AG04449 (cell line): ENCODE measurements at regions of chr2 and their contacts with region 1.

Region 1: GRCh38 chr2:231104115-231104713 is 20.6 kb downstream of the HTR2B start:
- DNase-seq: peak; percentile 26
- H3K4me3 ChIP-seq: no peak overlapping the region
- CTCF ChIP-seq: peak; percentile 66

Region 2: GRCh38 chr2:231063347-231063746 is 40.9 kb before region 1 on chr2:
- CTCF ChIA-PET with region 1: no interaction called
- POLR2A ChIA-PET with region 1: no interaction called
- DNase-seq: no peak
- H3K4me3 ChIP-seq: no peak overlapping the region
- CTCF ChIP-seq: no peak

Region 3: DNA sequence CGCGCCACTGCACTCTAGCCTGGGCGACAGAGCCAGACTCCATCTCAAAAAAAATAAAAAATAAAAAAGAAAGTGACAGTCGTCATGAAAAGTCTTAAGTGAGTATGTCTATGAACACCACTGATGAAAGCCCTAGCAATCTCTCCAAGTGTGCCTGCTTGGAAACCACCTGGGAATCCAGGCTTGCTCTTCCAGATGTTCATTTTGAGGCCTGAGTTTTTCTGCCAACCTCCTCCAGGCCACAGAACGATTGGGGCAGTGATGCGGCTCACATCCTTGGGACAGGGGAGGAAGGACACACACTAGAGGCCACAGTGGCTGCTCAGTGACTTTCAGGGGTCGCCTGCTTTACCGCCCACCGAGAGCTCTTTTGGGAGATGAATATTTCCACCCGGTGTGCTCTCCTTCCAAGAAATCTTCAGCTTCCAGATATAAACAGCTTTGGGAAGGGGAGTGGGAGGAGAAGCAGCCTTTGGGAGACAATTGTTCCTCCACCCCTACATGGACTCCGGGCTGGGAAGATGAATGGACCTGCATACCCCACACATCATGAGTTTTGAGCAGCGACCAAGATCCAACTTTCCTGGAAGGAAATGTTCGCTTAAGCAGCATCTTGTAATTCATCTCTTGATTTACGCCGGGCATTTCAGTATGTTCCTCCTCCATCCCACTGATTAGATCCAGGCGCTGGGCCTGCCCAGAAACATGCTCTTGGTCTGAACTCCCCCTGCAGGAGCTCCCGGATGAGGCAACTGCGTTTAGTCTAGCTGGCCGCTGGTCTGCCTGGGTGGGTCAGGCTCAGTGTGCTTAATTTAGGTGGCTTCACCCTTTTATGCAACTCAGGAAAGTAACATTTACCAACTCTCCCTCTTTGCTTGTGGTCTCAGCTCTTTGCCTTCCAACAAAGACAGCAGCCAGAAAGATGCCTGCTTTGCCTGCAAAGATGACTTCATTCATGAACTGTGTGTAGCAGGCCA is 88.0 kb after region 1 on chr2:
- CTCF ChIA-PET with region 1: interaction called, 336 read pairs
- POLR2A ChIA-PET with region 1: no interaction called
- DNase-seq: peak; percentile 60
- H3K4me3 ChIP-seq: no peak overlapping the region
- CTCF ChIP-seq: peak; percentile 89

Region 4: DNA sequence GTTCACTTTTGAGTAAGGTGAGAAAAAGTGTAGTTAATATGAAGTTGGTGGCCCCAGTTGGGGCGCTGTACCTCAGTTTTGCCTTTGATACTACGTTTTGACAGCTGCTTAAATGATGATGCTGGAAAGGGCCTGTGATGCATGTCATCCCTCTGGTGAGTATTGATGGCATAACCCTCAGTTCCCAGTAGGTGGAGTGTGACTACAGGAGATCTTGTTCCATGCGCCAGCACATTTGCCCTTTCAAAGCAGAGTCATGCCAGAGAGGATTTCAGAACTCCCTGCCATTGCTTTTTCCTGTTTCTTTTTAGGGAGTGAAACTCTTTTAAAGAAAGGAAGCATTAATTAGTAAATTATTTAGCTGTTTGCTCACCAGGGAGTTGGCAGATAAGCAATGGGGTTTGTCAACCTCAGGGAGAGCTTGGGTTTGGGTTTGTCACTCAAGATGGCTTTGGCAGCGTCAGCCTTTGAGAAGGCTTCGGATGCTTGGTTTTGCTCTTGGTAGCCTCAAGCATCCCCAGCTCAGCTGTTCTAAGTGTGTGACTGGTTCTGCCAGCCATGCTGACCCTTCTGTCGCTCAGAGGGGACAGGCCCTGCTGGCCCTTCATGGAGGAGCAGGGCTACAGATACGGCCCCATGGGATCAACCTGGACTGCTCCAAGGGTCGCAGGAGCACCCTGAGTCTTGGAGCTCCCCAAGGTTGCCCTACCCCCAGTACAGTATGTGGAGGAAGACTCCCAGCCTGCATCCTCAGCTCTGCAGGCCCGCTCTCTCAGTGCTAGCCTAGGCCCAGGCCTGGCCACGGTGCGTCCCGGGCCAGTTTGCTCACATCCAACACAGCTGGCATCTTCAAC is 123.3 kb after region 1 on chr2:
- CTCF ChIA-PET with region 1: interaction called, 87 read pairs
- POLR2A ChIA-PET with region 1: no interaction called
- DNase-seq: peak; percentile 34
- H3K4me3 ChIP-seq: no peak overlapping the region
- CTCF ChIP-seq: peak; percentile 86

Region 5: GRCh38 chr2:231399853-231400680 is 295.9 kb after region 1 on chr2:
- CTCF ChIA-PET with region 1: interaction called, 11 read pairs
- POLR2A ChIA-PET with region 1: no interaction called
- DNase-seq: no peak
- H3K4me3 ChIP-seq: no peak overlapping the region
- CTCF ChIP-seq: no peak